Naive thymus-derived CD8-positive, alpha-beta T cell (primary cell): ENCODE measurements at regions of chr9 and their contacts with region 1.

Region 1: GRCh38 chr9:19048966-19049916 is at the start of gene RRAGA:
- DNase-seq: peak; percentile 90 to 96 (median 94)
- ATAC-seq: peak; percentile 89 to 91
- H3K4me3 Mint-ChIP-seq: peak within 1 kb of the TSS; percentile 92 to 98 (median 96)
- H3K27ac Mint-ChIP-seq: peak within 1 kb of the TSS; percentile 97 to 99 (median 98)
- H3K4me1 Mint-ChIP-seq: peaks cover 6 to 54% (median 38%) of the 10 kb centered on the region in 4 donors
- H3K27me3 Mint-ChIP-seq: no peaks in the 10 kb centered on the region
- polyA plus RNA-seq, gene RRAGA: 64.9 to 82.1 (median 66.2) TPM

Region 2: DNA sequence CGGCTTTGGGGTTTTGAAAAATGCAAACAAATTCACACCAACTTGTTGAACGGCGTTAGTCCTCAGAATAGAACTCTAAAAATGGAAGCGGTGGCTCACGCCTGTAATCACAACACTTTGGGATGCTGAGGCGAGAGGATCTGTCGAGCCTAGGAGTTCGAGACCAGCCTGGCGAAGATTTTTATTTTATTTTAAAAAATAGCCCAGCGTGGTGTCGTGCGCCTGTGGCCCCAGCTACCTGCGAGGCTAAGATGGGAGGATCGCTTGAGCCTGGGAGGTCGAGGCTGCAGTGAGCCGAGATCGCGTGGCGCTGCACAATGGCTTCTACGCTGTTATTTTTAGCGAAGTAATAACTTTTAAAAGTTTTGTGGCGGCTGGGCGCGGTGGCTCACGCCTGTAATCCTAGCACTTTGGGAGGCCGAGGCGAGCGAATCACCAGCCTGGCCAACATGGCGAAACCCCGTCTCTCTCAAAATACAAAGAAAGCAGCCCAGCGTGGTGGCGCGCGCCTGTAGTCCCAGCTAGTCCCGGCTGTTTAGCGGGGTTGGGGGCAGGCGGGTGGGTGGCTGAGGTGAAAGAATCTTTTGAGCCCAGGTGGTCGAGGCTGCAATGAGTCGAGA is 78.8 kb after region 1 on chr9:
- POLR2A ChIA-PET with region 1: interaction called, 13 read pairs
- DNase-seq: peak in 8 of 10 donors; percentile 12 to 48 (median 28)
- ATAC-seq: peak; percentile 31 to 43
- H3K4me3 Mint-ChIP-seq: peak overlapping the region; percentile 76 to 97 (median 92)
- H3K27ac Mint-ChIP-seq: peak overlapping the region; percentile 86 to 97 (median 93)
- H3K4me1 Mint-ChIP-seq: peaks cover 13 to 65% (median 56%) of the 10 kb centered on the region in 4 donors
- H3K27me3 Mint-ChIP-seq: no peaks in the 10 kb centered on the region

Region 3: DNA sequence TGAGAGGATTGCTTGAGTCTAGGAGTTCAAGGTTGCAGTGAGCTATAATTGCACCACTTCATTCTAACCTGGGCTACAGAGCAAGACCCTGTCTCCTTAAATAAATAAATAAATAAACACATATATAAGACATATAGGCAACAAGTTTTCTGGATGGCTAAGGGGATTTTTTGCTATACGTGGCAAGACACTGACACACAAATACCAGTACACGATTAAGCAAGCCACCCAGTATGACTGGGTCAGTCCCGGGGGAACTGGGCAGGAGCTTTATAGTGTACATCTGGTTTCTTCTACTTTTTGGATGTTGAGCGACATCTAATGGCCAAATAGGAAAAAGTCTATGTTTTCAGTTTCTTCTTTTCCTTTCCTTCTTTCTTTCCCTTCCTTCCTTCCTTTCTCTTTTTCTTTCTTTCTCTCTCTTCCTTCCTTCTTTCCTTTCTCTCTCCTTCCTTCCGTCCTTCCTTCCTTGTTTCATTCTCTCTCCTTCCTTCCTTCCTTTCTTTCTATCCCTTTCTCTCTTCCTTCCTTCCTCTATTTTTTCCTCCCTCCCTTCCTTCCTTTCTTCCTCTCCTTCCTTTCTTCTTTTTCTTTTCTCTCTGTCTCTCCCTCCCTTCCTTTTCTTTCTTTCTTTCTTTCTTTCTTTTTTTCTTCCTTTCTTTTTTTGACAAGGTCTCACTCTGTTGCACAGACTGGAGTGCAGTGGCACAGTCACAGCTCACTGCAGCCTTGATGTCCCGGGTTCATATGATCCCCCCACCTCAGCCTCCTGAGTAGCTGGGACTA is 125.1 kb after region 1 on chr9:
- POLR2A ChIA-PET with region 1: interaction called, 10 read pairs
- DNase-seq: peak in 6 of 10 donors; percentile 12 to 58 (median 27)
- ATAC-seq: peak; percentile 57 to 90
- H3K4me3 Mint-ChIP-seq: peak overlapping the region in 5 of 10 donors; percentile 21 to 53 (median 39)
- H3K27ac Mint-ChIP-seq: peak overlapping the region in 7 of 10 donors; percentile 29 to 93 (median 71)
- H3K4me1 Mint-ChIP-seq: peaks cover 16 to 32% (median 30%) of the 10 kb centered on the region in 4 donors
- H3K27me3 Mint-ChIP-seq: no peaks in the 10 kb centered on the region

Region 4: GRCh38 chr9:19184144-19184917 is 135.1 kb after region 1 on chr9:
- POLR2A ChIA-PET with region 1: interaction called, 11 read pairs
- DNase-seq: peak; percentile 38 to 90 (median 72)
- ATAC-seq: peak; percentile 99 to 100
- H3K4me3 Mint-ChIP-seq: peak overlapping the region; percentile 26 to 86 (median 73)
- H3K27ac Mint-ChIP-seq: peak overlapping the region; percentile 95 to 98 (median 96)
- H3K4me1 Mint-ChIP-seq: peaks cover 3 to 42% (median 20%) of the 10 kb centered on the region in 4 donors
- H3K27me3 Mint-ChIP-seq: no peaks in the 10 kb centered on the region

Region 5: GRCh38 chr9:19230356-19231125 is 181.3 kb after region 1 on chr9 and contains the start of gene DENND4C:
- POLR2A ChIA-PET with region 1: interaction called, 25 read pairs
- DNase-seq: peak; percentile 69 to 90 (median 81)
- ATAC-seq: peak; percentile 84 to 86
- H3K4me3 Mint-ChIP-seq: peak within 1 kb of the TSS in 6 of 10 donors; percentile 77 to 89 (median 84)
- H3K27ac Mint-ChIP-seq: peak within 1 kb of the TSS in 9 of 10 donors; percentile 64 to 94 (median 91)
- H3K4me1 Mint-ChIP-seq: peaks cover 2 to 24% (median 19%) of the 10 kb centered on the region in 4 donors
- H3K27me3 Mint-ChIP-seq: no peaks in the 10 kb centered on the region
- polyA plus RNA-seq, gene DENND4C: 31.0 to 40.2 (median 35.1) TPM

Region 6: GRCh38 chr9:19379697-19380046 is 330.4 kb after region 1 on chr9:
- POLR2A ChIA-PET with region 1: interaction called, 28 read pairs
- DNase-seq: peak in 4 of 10 donors; percentile 41 to 71 (median 44)
- ATAC-seq: peak; percentile 53 to 57
- H3K4me3 Mint-ChIP-seq: peak overlapping the region; percentile 93 to 99 (median 97)
- H3K27ac Mint-ChIP-seq: peak overlapping the region; percentile 97 to 99 (median 99)
- H3K4me1 Mint-ChIP-seq: peaks cover 23 to 56% (median 41%) of the 10 kb centered on the region in 4 donors
- H3K27me3 Mint-ChIP-seq: no peaks in the 10 kb centered on the region